BJ (cell line): ENCODE measurements at regions of chr19 and their contacts with region 1.

Region 1: DNA sequence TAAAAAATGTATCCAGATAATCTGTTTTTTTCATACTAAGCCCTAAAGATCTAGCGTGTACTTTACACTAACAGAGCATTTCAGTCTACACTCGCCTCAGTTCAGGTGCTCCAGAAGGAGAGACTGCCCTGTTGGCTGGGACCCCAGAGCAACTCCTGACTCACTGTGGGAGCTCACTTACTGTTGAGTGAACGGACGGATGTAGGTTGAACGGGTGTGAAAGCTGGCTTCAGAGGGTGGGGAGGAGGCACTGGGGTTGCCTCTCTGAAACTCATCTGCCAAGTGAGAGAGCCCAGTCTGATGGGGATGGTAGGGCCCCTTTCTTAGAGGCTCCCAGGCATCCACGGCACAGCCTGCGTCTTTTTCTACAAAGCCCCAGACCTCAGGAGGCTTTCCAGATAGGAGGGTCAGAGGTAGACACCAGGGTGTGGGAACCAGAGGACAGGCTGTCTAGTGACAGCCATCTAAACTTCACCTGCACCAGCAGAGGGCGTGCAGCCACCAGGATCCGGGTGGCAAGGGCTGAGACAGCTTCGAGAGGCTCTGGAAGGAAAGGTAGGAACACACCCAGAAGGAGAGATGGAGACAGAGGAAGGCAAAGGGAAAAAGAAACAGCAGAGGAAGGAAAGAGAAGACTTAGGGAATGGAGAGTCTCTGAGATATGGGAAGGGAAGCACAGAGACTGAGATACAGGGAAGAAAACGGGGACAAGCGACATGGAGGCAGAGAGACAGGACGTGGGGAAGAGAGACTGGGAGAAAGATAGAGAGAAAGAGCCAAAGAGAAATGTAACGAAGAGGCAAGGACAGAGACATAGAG is 3.7 kb downstream of the KASH5 start:
- DNase-seq: no peak
- H3K4me3 ChIP-seq: no peak overlapping the region
- H3K27me3 ChIP-seq: peaks cover 6% of the 10 kb centered on the region
- CTCF ChIP-seq: peak; percentile 89

Region 2: DNA sequence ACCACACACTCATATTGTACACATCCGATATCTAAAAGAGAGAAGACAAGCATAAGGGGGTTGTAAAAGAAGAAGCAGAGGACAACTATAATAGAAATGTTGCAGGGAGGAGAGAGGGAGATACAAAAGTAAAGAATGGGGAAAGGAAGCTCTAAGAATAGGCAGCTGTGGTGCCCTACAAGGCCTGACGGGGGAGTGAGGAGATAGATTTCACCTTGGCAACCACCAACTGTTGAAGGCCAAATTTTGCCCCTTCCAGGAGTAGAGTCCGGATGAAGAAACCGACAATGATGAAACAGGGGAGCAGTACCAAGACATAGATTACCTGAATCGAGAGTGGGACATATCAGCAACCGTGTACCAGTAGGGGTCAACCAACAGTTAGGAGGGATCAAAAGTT is 82.7 kb before region 1 on chr19:
- CTCF ChIA-PET with region 1: no interaction called
- POLR2A ChIA-PET with region 1: no interaction called
- DNase-seq: no peak
- H3K4me3 ChIP-seq: no peak overlapping the region
- H3K27me3 ChIP-seq: no peaks in the 10 kb centered on the region
- CTCF ChIP-seq: no peak

Region 3: GRCh38 chr19:49378512-49378911 is 13.3 kb before region 1 on chr19:
- CTCF ChIA-PET with region 1: interaction called, 18 read pairs
- POLR2A ChIA-PET with region 1: no interaction called
- DNase-seq: no peak
- H3K4me3 ChIP-seq: no peak overlapping the region
- H3K27me3 ChIP-seq: peaks cover 2% of the 10 kb centered on the region; the same call in 1 of the 2 replicates
- CTCF ChIP-seq: no peak

Region 4: GRCh38 chr19:49436369-49437017 is 44.7 kb after region 1 on chr19:
- CTCF ChIA-PET with region 1: interaction called, 13 read pairs
- POLR2A ChIA-PET with region 1: no interaction called
- DNase-seq: no peak
- H3K4me3 ChIP-seq: no peak overlapping the region
- H3K27me3 ChIP-seq: peaks cover 66% of the 10 kb centered on the region
- CTCF ChIP-seq: no peak

Region 5: GRCh38 chr19:49443366-49444099 is 51.7 kb after region 1 on chr19:
- CTCF ChIA-PET with region 1: interaction called, 16 read pairs
- POLR2A ChIA-PET with region 1: no interaction called
- DNase-seq: peak; percentile 53
- H3K4me3 ChIP-seq: peak overlapping the region; percentile 72
- H3K27me3 ChIP-seq: peaks cover 29% of the 10 kb centered on the region
- CTCF ChIP-seq: peak; percentile 84